HCT116 (cell line): ENCODE measurements at regions of chr5 and their contacts with region 1.

Region 1: GRCh38 chr5:88690409-88691229 is 192.4 kb downstream of the MEF2C start:
- DNase-seq: peak; percentile 44
- ATAC-seq: peak; percentile 96
- H3K4me3 ChIP-seq: peak overlapping the region; percentile 2 to 32; a peak in 2 of 4 replicates
- H3K27ac ChIP-seq: no peak overlapping the region
- H3K4me1 ChIP-seq: peaks cover 0 to 10% of the 10 kb centered on the region in 2 experiments; a peak in 2 of 4 replicates
- H3K27me3 ChIP-seq: no peaks in the 10 kb centered on the region
- CTCF ChIP-seq: peak; percentile 65 to 98 (median 95); a peak in 5 of 6 replicates
- POLR2A ChIP-seq: no peak
- RAD21 ChIP-seq: peak; percentile 96

Region 2: DNA sequence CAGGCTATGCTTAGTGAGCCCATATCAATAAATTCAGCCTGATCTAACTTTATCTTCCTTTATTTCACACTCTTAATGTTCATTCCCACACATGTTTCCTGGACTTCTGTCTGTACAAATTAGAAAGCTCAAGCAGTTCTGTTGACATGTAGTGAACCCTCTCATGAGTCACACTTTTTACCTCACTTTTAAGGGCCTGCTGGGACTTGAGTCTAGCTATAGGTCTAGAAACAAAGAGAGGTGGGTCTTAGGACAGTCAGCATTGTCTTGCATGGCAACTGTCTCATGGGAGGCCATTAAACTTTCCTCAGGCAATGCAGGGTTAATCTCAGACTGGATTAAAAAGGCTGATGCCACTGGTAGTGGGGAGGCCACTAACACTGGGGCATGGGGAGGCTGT is 1269.3 kb before region 1 on chr5:
- CTCF ChIA-PET with region 1: no interaction called
- POLR2A ChIA-PET with region 1: no interaction called
- RAD21 ChIA-PET with region 1: no interaction called
- intact Hi-C with region 1: loop called (anchors 1 kb)
- DNase-seq: no peak
- ATAC-seq: no peak
- H3K4me3 ChIP-seq: no peak overlapping the region
- H3K27ac ChIP-seq: no peak overlapping the region
- H3K4me1 ChIP-seq: peaks cover 0 to 6% of the 10 kb centered on the region in 2 experiments; a peak in 1 of 4 replicates
- H3K27me3 ChIP-seq: no peaks in the 10 kb centered on the region
- CTCF ChIP-seq: no peak
- POLR2A ChIP-seq: no peak
- RAD21 ChIP-seq: no peak

Region 3: GRCh38 chr5:87541033-87541432 is 1149.6 kb before region 1 on chr5:
- CTCF ChIA-PET with region 1: no interaction called
- POLR2A ChIA-PET with region 1: no interaction called
- RAD21 ChIA-PET with region 1: no interaction called
- intact Hi-C with region 1: loop called (anchors 10 kb)
- DNase-seq: peak; percentile 34
- ATAC-seq: peak; percentile 69
- H3K4me3 ChIP-seq: no peak overlapping the region
- H3K27ac ChIP-seq: no peak overlapping the region
- H3K4me1 ChIP-seq: no peaks in the 10 kb centered on the region
- H3K27me3 ChIP-seq: no peaks in the 10 kb centered on the region
- CTCF ChIP-seq: peak in 1 of 3 experiments; percentile 17; a peak in 2 of 6 replicates
- POLR2A ChIP-seq: no peak
- RAD21 ChIP-seq: peak; percentile 40

Region 4: DNA sequence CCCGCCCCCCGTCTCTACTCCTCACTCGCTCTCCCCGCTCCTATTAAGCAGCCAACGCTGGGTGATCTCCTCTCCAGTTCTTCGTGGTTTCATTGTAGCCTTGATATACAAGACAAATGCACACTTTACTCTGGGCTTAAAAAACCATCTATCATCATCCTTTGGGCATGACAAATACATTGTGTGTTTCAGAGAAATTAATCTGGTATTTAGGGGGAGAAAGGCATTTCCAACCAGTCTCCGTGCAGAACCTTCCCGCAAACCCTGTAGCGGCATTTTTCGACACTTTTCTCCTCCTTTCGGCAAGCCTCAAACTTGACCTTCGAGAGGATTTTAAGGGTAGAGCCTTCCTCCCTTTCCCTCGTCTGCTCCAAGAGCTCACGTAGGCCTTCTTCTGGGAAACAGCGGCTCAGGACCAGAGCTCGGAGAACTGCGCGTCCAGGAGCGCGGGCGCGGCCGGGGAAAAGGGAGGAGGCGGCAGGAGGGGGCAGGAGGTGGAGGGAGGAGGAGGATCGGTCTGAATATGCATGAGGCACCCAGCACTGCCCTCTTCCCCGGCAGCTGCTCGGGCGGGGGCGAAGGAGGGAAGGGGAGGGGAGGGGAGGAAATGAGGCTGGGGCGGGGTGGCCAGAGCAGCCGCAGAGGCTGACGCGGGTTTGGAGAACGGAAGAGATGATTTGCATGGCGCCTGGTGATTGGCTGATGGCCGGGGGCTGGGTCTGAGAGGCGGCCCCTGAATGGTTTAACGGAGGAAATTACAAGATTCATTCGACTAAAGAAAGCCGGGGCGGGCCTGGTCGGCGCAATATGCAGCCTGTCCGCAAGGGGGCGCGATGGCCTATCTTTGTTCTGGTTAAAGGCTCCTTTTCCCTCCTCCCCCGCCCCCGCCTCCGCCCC is 549.5 kb before region 1 on chr5:
- CTCF ChIA-PET with region 1: interaction called, 13 read pairs
- POLR2A ChIA-PET with region 1: no interaction called
- RAD21 ChIA-PET with region 1: no interaction called
- intact Hi-C with region 1: no loop called
- DNase-seq: peak; percentile 93
- ATAC-seq: peak; percentile 95
- H3K4me3 ChIP-seq: peak overlapping the region; percentile 54 to 63
- H3K27ac ChIP-seq: no peak overlapping the region
- H3K4me1 ChIP-seq: peaks cover 5 to 19% of the 10 kb centered on the region in 2 experiments; a peak in 3 of 4 replicates
- H3K27me3 ChIP-seq: no peaks in the 10 kb centered on the region
- CTCF ChIP-seq: peak; percentile 22 to 68 (median 51); a peak in 4 of 6 replicates
- POLR2A ChIP-seq: no peak
- RAD21 ChIP-seq: peak; percentile 56

Region 5: GRCh38 chr5:88680253-88681132 is 10.1 kb before region 1 on chr5:
- CTCF ChIA-PET with region 1: interaction called, 12 read pairs
- POLR2A ChIA-PET with region 1: no interaction called
- RAD21 ChIA-PET with region 1: interaction called in 1 of 2 experiments, 3 read pairs
- intact Hi-C with region 1: no loop called
- DNase-seq: peak; percentile 24
- ATAC-seq: peak; percentile 92
- H3K4me3 ChIP-seq: peak overlapping the region; percentile 25 to 55
- H3K27ac ChIP-seq: no peak overlapping the region
- H3K4me1 ChIP-seq: peaks cover 0 to 12% of the 10 kb centered on the region in 2 experiments; a peak in 2 of 4 replicates
- H3K27me3 ChIP-seq: no peaks in the 10 kb centered on the region
- CTCF ChIP-seq: peak; percentile 68 to 89 (median 87); a peak in 5 of 6 replicates
- POLR2A ChIP-seq: no peak
- RAD21 ChIP-seq: peak; percentile 90

Region 6: GRCh38 chr5:88724201-88724600 is 33.6 kb after region 1 on chr5:
- CTCF ChIA-PET with region 1: interaction called, 12 read pairs
- POLR2A ChIA-PET with region 1: no interaction called
- RAD21 ChIA-PET with region 1: interaction called in 1 of 2 experiments, 7 read pairs
- intact Hi-C with region 1: no loop called
- DNase-seq: peak; percentile 8
- ATAC-seq: 0 out of 2 replicates have a peak, but pooled peaks have one; percentile 44
- H3K4me3 ChIP-seq: no peak overlapping the region
- H3K27ac ChIP-seq: no peak overlapping the region
- H3K4me1 ChIP-seq: no peaks in the 10 kb centered on the region
- H3K27me3 ChIP-seq: no peaks in the 10 kb centered on the region
- CTCF ChIP-seq: peak; percentile 20 to 51 (median 27); a peak in 4 of 6 replicates
- POLR2A ChIP-seq: no peak
- RAD21 ChIP-seq: peak; percentile 58